ENCODE measurements at regions of chr5 and their contacts with region 1.

Region 1: GRCh38 chr5:176559683-176560082 is 10.5 kb downstream of the CDHR2 start:
- DNase-seq: no peak

Region 2: DNA sequence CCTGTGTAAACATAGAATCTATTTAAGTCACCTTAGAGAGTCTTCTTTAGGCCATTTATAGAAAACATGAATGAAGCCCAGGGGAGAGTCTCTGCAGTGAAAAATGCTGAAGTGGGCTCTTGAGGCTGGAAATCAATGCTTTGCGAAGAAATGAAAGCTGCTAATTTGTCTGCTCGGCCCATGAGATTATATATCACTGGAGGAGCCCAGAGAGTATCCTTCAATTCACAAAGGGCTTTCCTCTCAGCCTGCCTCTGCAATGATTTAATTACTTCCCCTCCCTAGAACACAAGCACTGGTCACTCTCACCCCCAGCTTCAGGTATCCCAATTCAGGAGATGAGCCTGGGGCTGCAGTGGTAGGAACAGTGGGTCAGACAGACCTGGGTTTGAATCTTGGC is 1107.5 kb before region 1 on chr5:
- intact Hi-C with region 1: loop called in 1 of 2 experiments (anchors 5 kb)
- DNase-seq: no peak